CD4-positive, alpha-beta memory T cell (primary cell): ENCODE measurements at regions of chr6 and their contacts with region 1.

Region 1: GRCh38 chr6:159062564-159062945 is 17.8 kb upstream of the TAGAP start:
- DNase-seq: peak; percentile 80 to 87 (median 83)
- H3K4me3 ChIP-seq: no peak overlapping the region
- H3K4me3 Mint-ChIP-seq: peak overlapping the region; percentile 44 to 80 (median 72)
- H3K27ac ChIP-seq: peak overlapping the region; percentile 57
- H3K27ac Mint-ChIP-seq: peak overlapping the region; percentile 88 to 99 (median 98)
- H3K4me1 ChIP-seq: peaks cover 87% of the 10 kb centered on the region
- H3K4me1 Mint-ChIP-seq: peaks cover 66 to 91% (median 79%) of the 10 kb centered on the region in 4 donors
- H3K27me3 ChIP-seq: no peaks in the 10 kb centered on the region
- H3K27me3 Mint-ChIP-seq: no peaks in the 10 kb centered on the region

Region 2: GRCh38 chr6:159008656-159009288 is 53.8 kb before region 1 on chr6:
- CTCF ChIA-PET with region 1: interaction called, 29 read pairs
- POLR2A ChIA-PET with region 1: interaction called, 21 read pairs
- intact Hi-C with region 1: no loop called
- DNase-seq: peak; percentile 54 to 68 (median 66)
- H3K4me3 ChIP-seq: peak overlapping the region in 1 of 2 donors; percentile 29
- H3K4me3 Mint-ChIP-seq: peak overlapping the region; percentile 64 to 77 (median 72)
- H3K27ac ChIP-seq: no peak overlapping the region
- H3K27ac Mint-ChIP-seq: peak overlapping the region; percentile 7 to 90 (median 77)
- H3K4me1 ChIP-seq: peaks cover 44% of the 10 kb centered on the region
- H3K4me1 Mint-ChIP-seq: peaks cover 37 to 55% (median 47%) of the 10 kb centered on the region in 4 donors
- H3K27me3 ChIP-seq: no peaks in the 10 kb centered on the region
- H3K27me3 Mint-ChIP-seq: no peaks in the 10 kb centered on the region

Region 3: DNA sequence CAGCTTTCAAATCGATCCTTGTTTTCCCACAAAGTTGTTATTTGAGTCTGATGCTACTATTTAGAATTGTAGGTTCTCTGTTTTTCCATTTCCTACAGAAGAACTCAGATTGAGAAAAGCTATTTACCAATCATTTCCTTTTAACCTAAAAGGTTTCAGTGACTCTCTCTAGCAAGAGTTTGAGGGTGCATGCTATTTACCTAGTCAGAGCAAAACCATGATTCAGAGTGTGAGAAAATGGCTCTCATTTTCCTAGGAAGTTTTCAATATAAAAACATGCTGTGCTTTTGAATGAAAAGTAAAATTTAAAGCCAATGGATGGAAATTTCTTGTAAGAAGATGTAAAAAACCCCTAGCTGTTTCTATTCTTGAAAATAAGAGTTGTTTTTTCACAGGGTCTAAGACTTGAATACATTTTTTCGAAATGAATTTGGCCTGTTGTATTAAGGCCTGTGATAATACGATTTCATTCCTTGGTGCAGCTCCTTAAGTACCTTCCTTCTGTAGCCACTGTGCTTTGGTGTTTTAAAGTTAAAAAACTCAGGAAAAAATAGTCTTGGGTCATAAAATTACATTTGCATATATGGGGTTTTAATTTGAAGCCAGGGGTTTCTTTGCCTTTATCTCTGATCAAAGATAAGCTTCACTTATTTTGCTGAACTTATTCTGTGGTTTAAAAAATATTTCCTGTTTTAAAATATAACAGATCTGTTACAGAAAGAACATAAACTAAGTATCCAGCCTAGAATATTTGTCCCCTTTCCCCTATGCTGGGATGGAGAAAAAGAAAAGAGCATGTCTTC is 44.6 kb before region 1 on chr6:
- CTCF ChIA-PET with region 1: no interaction called
- POLR2A ChIA-PET with region 1: interaction called, 21 read pairs
- intact Hi-C with region 1: no loop called
- DNase-seq: no peak
- H3K4me3 ChIP-seq: no peak overlapping the region
- H3K4me3 Mint-ChIP-seq: peak overlapping the region in 6 of 8 donors; percentile 25 to 76 (median 50)
- H3K27ac ChIP-seq: peak overlapping the region; percentile 48
- H3K27ac Mint-ChIP-seq: peak overlapping the region; percentile 52 to 90 (median 77)
- H3K4me1 ChIP-seq: peaks cover 64% of the 10 kb centered on the region
- H3K4me1 Mint-ChIP-seq: peaks cover 39 to 62% (median 51%) of the 10 kb centered on the region in 4 donors
- H3K27me3 ChIP-seq: no peaks in the 10 kb centered on the region
- H3K27me3 Mint-ChIP-seq: no peaks in the 10 kb centered on the region

Region 4: GRCh38 chr6:159074120-159074684 is 11.6 kb after region 1 on chr6:
- CTCF ChIA-PET with region 1: interaction called, 20 read pairs
- POLR2A ChIA-PET with region 1: interaction called, 53 read pairs
- intact Hi-C with region 1: loop called (anchors 2 kb)
- DNase-seq: no peak
- H3K4me3 ChIP-seq: no peak overlapping the region
- H3K4me3 Mint-ChIP-seq: no peak overlapping the region
- H3K27ac ChIP-seq: no peak overlapping the region
- H3K27ac Mint-ChIP-seq: no peak overlapping the region
- H3K4me1 ChIP-seq: peaks cover 12% of the 10 kb centered on the region
- H3K4me1 Mint-ChIP-seq: peaks cover 20 to 37% (median 27%) of the 10 kb centered on the region in 4 donors
- H3K27me3 ChIP-seq: no peaks in the 10 kb centered on the region
- H3K27me3 Mint-ChIP-seq: peaks cover 3% of the 10 kb centered on the region in 2 donors

Region 5: GRCh38 chr6:159080217-159080976 is 17.8 kb after region 1 on chr6:
- CTCF ChIA-PET with region 1: interaction called, 20 read pairs
- POLR2A ChIA-PET with region 1: interaction called, 53 read pairs
- intact Hi-C with region 1: loop called (anchors 2 kb)
- DNase-seq: no peak
- H3K4me3 ChIP-seq: no peak overlapping the region
- H3K4me3 Mint-ChIP-seq: peak overlapping the region in 1 of 8 donors; percentile 33
- H3K27ac ChIP-seq: no peak overlapping the region
- H3K27ac Mint-ChIP-seq: peak overlapping the region in 4 of 7 donors; percentile 4 to 62 (median 24)
- H3K4me1 ChIP-seq: peaks cover 22% of the 10 kb centered on the region
- H3K4me1 Mint-ChIP-seq: peaks cover 18 to 43% (median 29%) of the 10 kb centered on the region in 4 donors
- H3K27me3 ChIP-seq: no peaks in the 10 kb centered on the region
- H3K27me3 Mint-ChIP-seq: no peaks in the 10 kb centered on the region

Region 6: GRCh38 chr6:159098636-159099106 is 36.1 kb after region 1 on chr6:
- CTCF ChIA-PET with region 1: interaction called, 68 read pairs
- POLR2A ChIA-PET with region 1: interaction called, 109 read pairs
- intact Hi-C with region 1: loop called (anchors 1 kb)
- DNase-seq: peak; percentile 82 to 91 (median 88)
- H3K4me3 ChIP-seq: peak overlapping the region in 1 of 2 donors; percentile 29
- H3K4me3 Mint-ChIP-seq: peak overlapping the region; percentile 71 to 89 (median 81)
- H3K27ac ChIP-seq: peak overlapping the region; percentile 76
- H3K27ac Mint-ChIP-seq: peak overlapping the region; percentile 93 to 99 (median 98)
- H3K4me1 ChIP-seq: peaks cover 64% of the 10 kb centered on the region
- H3K4me1 Mint-ChIP-seq: peaks cover 43 to 82% (median 60%) of the 10 kb centered on the region in 4 donors
- H3K27me3 ChIP-seq: no peaks in the 10 kb centered on the region
- H3K27me3 Mint-ChIP-seq: no peaks in the 10 kb centered on the region